ENCODE measurements at regions of chr18 and their contacts with region 1.

Region 1: DNA sequence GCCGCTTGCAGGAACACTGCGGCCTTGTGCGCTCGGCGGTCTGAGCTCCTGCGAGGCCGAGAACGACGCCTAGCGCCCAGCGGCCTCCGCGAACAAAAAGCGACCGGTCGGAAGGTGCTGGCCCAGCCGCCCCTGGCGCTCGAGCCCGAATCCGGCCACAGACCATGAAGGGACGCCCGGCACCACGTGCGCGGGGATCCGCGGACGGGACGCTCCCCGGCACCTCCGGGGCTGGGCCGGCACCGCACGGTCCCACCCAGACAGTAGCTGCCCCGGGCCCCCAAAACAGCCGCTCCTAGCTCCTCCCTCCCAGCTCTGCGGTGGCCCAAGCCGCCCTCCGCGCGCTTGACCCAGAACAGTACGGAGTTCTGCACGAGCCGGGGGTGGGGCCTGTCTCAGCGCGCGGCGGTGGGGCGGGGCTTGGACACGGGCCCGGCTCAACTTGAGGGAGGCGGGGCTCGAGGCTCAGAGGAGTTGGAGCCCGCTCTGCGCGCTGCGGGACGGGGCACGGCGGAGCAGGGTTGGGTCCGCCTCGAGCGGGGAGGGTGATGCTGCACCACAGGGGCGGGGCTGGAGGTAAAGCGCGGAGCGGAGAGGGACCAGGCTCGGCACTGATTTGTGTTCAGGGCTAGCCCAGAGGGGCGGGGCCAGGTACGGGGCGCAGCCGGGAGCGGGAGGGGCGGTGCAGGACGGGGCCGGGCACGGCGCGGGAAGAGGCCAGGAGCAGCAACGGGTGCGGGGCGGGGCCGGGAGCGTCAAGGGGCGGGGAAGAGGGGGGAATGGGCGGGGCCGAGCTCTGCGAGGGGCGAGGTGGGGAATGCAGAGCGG is 538 bp upstream of the IMPA2 start:
- DNase-seq: peak; percentile 98
- H3K4me3 Mint-ChIP-seq: peak overlapping the region; percentile 80
- H3K27ac Mint-ChIP-seq: peak overlapping the region; percentile 80
- H3K4me1 Mint-ChIP-seq: peaks cover 16% of the 10 kb centered on the region
- H3K27me3 Mint-ChIP-seq: peaks cover 9% of the 10 kb centered on the region

Region 2: GRCh38 chr18:11851146-11851805 is 129.5 kb before region 1 on chr18 and contains the start of gene CHMP1B:
- intact Hi-C with region 1: loop called (anchors 1 kb)
- DNase-seq: peak; percentile 95
- H3K4me3 Mint-ChIP-seq: peak within 1 kb of the TSS; percentile 100
- H3K27ac Mint-ChIP-seq: peak within 1 kb of the TSS; percentile 100
- H3K4me1 Mint-ChIP-seq: peaks cover 28% of the 10 kb centered on the region
- H3K27me3 Mint-ChIP-seq: no peaks in the 10 kb centered on the region
- total RNA-seq, gene CHMP1B: 27.3 and 28.3 TPM in 2 replicates

Region 3: DNA sequence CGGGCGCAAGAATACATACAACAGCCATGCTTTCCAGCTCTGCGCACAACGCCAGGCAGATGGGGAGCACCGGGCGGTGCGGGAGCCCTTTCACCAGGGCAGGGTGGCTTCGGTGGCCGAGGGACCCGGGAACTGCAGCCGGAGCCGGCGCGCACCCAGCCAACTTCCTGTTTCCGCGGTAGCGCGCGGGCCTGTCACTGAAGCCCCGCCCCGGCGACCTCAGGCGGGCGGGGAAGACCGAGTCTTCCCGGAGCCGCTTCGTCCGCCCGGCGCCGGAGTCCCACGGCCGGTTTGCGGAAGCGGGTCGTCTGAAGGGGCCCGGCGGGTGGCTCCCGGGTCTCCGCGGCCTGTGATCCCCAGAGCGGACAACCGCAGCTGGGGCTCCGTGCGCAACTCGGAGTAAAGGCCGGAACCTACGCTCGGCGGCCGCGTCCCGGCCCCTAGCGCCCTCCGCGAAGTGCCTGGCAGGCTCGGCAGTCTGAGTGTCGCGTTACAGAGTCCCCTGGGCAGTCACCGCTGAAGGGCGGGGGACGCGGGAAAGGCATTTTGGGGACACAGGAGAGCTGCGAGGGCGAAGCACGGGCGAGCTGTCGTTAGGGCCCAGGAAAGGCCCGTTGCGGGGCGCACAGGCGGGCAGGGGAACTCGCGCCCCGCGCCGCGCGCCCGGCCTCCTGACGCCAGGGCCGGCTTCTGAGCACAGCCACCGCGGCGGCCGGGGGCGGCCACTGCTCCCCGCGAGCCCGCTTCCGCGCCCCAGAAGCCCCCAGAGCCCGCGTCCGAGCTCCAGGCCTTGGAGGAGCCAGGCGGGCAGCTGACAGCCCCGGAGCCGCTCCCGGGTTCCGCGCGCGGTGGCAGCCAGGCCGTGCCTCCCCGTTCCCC is 72.3 kb before region 1 on chr18 and contains the start of gene MPPE1:
- intact Hi-C with region 1: loop called (anchors 1 kb)
- DNase-seq: peak; percentile 86
- H3K4me3 Mint-ChIP-seq: peak within 1 kb of the TSS; percentile 90
- H3K27ac Mint-ChIP-seq: peak within 1 kb of the TSS; percentile 87
- H3K4me1 Mint-ChIP-seq: peaks cover 22% of the 10 kb centered on the region
- H3K27me3 Mint-ChIP-seq: no peaks in the 10 kb centered on the region
- total RNA-seq, gene MPPE1: 37.5 and 40.6 TPM in 2 replicates

Region 4: GRCh38 chr18:11947214-11948191 is 33.3 kb before region 1 on chr18:
- intact Hi-C with region 1: loop called (anchors 1 kb)
- DNase-seq: peak; percentile 62
- H3K4me3 Mint-ChIP-seq: peak overlapping the region; percentile 66
- H3K27ac Mint-ChIP-seq: peak overlapping the region; percentile 82
- H3K4me1 Mint-ChIP-seq: peaks cover 11% of the 10 kb centered on the region
- H3K27me3 Mint-ChIP-seq: no peaks in the 10 kb centered on the region

Region 5: DNA sequence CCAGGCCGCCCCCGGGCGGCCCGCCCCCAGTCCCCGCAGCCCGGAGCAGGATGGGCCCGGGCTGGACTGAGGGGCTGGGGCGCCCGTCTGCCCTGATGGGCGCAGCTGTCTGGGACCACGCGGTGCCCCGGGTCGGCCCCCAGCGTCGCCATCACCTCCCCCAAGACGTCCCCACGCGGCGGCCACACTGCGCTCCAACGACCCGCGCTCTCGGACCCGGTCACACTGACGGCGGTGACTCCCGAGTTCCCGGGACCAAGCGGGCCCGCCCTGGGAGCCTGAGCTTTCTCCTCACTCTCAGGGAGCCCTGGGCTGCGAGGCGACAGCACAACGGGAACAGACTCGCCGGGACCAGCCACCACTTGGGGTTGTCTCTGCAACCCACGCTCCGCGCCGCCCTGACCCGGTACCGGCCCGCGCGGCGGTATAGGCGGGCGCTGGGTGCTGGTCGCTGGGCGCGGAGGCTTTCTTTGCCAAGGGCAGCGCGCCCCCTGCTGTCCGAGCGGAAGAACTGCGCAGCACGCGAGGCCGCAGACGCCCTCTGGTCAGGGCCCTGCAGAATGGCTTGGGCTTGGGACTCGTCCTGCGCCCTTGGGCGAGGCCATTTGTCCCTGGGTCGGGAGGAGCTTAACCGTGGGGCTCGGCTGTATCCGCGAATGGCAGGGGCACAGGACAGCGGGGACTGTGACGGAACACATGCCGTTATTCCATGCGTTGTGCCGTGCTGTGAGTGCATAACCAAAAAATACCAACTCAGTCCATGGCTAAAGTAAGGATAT is 58.1 kb after region 1 on chr18:
- intact Hi-C with region 1: loop called (anchors 2 kb)
- DNase-seq: peak; percentile 68
- H3K4me3 Mint-ChIP-seq: peak overlapping the region; percentile 69
- H3K27ac Mint-ChIP-seq: no peak overlapping the region
- H3K4me1 Mint-ChIP-seq: peaks cover 27% of the 10 kb centered on the region
- H3K27me3 Mint-ChIP-seq: peaks cover 4% of the 10 kb centered on the region

Region 6: GRCh38 chr18:12408247-12408869 is 427.6 kb after region 1 on chr18:
- intact Hi-C with region 1: loop called (anchors 5 kb)
- DNase-seq: no peak
- H3K4me3 Mint-ChIP-seq: peak overlapping the region; percentile 74
- H3K27ac Mint-ChIP-seq: peak overlapping the region; percentile 21
- H3K4me1 Mint-ChIP-seq: peaks cover 29% of the 10 kb centered on the region
- H3K27me3 Mint-ChIP-seq: peaks cover 32% of the 10 kb centered on the region

Region 7: GRCh38 chr18:13823707-13824395 is 1843.1 kb after region 1 on chr18 and contains the start of gene MC5R:
- intact Hi-C with region 1: no loop called
- DNase-seq: peak; percentile 57
- H3K4me3 Mint-ChIP-seq: peak within 1 kb of the TSS; percentile 62
- H3K27ac Mint-ChIP-seq: no peak within 1 kb of the TSS
- H3K4me1 Mint-ChIP-seq: peaks cover 5% of the 10 kb centered on the region
- H3K27me3 Mint-ChIP-seq: peaks cover 21% of the 10 kb centered on the region
- total RNA-seq, gene MC5R: not detected in 2 replicates

Measured in activated T-helper 2 cell treated with anti-CD3 and anti-CD28 coated beads, Interferon-gamma antibody, Interleukin-2, Interleukin-4, amounts not matched to agents 10 μg/mL and 5 μg/mL and 100 μg/mL, durations not matched to agents 14 hours and 24 hours and 36 hours (primary cell).